Endothelial cell of umbilical vein (primary cell): ENCODE measurements at regions of chr11 and their contacts with region 1.

Region 1: GRCh38 chr11:134124660-134125451 is 56.0 kb downstream of the JAM3 start:
- DNase-seq: peak; percentile 67
- H3K4me3 ChIP-seq: peak overlapping the region in 2 of 3 experiments; percentile 36 to 50
- H3K27ac ChIP-seq: peak overlapping the region; percentile 68
- H3K4me1 ChIP-seq: peaks cover 60% of the 10 kb centered on the region
- H3K27me3 ChIP-seq: no peaks in the 10 kb centered on the region
- CTCF ChIP-seq: no peak
- POLR2A ChIP-seq: no peak

Region 2: GRCh38 chr11:134062265-134063123 is 62.4 kb before region 1 on chr11:
- CTCF ChIA-PET with region 1: interaction called, 16 read pairs
- POLR2A ChIA-PET with region 1: interaction called, 3 read pairs
- dilution Hi-C with region 1: no loop called
- intact Hi-C with region 1: loop called (anchors 1 kb)
- DNase-seq: no peak
- H3K4me3 ChIP-seq: no peak overlapping the region
- H3K27ac ChIP-seq: no peak overlapping the region
- H3K4me1 ChIP-seq: peaks cover 26% of the 10 kb centered on the region
- H3K27me3 ChIP-seq: peaks cover 2 to 6% of the 10 kb centered on the region in 2 experiments
- CTCF ChIP-seq: no peak
- POLR2A ChIP-seq: no peak

Region 3: DNA sequence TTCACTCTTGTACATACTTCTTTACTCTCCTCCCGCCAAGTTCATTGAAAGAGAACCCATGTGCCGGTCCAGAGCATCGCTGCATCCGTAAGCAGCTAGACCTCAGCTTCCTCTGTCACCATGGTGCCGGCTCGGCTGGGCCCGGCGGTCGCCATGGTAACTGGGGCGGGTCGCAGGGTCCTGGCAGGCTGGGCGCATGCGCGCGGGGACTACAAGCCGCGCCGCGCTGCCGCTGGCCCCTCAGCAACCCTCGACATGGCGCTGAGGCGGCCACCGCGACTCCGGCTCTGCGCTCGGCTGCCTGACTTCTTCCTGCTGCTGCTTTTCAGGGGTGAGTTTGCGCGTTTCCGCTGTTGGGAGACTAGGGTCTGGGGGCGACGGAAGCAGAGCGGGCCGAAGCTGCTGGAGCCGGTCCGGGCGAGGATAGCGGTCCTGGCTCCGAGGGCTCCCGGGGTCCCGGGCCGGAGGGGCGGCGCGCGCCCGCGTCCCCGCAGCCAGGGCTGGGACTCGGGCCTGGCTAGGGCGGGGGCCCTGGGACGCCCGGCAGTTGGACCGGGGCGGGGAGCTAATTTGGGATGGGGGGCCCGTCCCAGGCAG is 55.9 kb before region 1 on chr11 and contains the start of gene JAM3:
- CTCF ChIA-PET with region 1: interaction called, 4 read pairs
- POLR2A ChIA-PET with region 1: no interaction called
- dilution Hi-C with region 1: no loop called
- intact Hi-C with region 1: loop called (anchors 1 kb)
- DNase-seq: peak; percentile 97
- H3K4me3 ChIP-seq: peak within 1 kb of the TSS; percentile 65 to 89 (median 77)
- H3K27ac ChIP-seq: peak within 1 kb of the TSS; percentile 42
- H3K4me1 ChIP-seq: peaks cover 14% of the 10 kb centered on the region
- H3K27me3 ChIP-seq: peaks cover 2 to 8% of the 10 kb centered on the region in 2 experiments
- CTCF ChIP-seq: no peak
- POLR2A ChIP-seq: peak; percentile 91
- total RNA-seq, gene JAM3: 106 and 137 TPM in 2 replicates

Region 4: DNA sequence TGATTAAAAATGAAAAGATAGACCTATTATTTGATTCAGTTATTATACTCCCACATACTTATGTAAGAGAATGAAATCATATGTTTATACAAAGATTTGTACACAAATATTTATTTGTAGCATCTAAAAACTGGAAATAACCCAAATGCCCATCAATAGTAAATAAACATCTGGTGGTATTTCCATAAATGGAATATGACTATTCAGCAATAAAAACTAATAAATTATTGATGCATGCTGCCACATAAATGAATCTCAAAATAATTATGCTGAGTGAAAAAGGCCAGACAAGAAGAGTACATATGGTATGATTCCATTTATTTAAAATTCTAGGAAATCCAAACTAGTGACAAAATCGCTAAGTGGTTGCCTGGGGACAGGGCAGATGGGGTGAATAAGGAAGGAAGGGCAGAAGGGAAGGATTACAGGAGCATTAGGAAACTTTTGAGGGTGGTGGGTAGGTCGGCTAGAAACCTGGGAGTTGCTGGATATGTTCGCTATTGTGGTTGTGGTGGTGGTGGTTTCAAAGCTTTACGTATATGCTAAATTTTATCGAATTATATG is 14.5 kb before region 1 on chr11:
- CTCF ChIA-PET with region 1: no interaction called
- POLR2A ChIA-PET with region 1: no interaction called
- dilution Hi-C with region 1: no loop called
- intact Hi-C with region 1: no loop called
- DNase-seq: no peak
- H3K4me3 ChIP-seq: no peak overlapping the region
- H3K27ac ChIP-seq: no peak overlapping the region
- H3K4me1 ChIP-seq: no peaks in the 10 kb centered on the region
- H3K27me3 ChIP-seq: no peaks in the 10 kb centered on the region
- CTCF ChIP-seq: no peak
- POLR2A ChIP-seq: no peak

Region 5: DNA sequence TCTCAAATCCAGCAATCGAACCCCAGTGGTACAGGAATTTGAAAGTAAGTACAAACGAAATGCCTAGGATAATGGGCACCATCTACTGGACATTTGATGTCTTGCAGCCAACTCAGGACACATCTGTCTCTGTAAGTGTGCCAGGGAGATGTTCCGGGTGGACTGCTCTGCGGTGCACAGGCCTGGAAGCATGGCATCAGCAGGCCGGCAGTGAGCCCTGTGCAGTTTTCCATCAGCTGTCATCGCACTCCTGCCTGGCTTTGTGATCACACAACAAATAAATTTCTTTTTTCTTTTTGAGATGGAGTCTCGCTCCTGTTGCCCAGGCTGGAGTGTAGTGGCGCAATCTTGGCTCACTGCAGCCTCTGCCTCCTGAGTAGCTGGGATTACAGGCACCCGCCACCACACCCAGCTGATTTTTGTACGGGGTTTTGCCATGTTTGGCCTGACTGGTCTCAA is 15.0 kb after region 1 on chr11:
- CTCF ChIA-PET with region 1: interaction called, 7 read pairs
- POLR2A ChIA-PET with region 1: no interaction called
- dilution Hi-C with region 1: no loop called
- intact Hi-C with region 1: loop called (anchors 1 kb)
- DNase-seq: peak; percentile 87
- H3K4me3 ChIP-seq: no peak overlapping the region
- H3K27ac ChIP-seq: no peak overlapping the region
- H3K4me1 ChIP-seq: no peaks in the 10 kb centered on the region
- H3K27me3 ChIP-seq: no peaks in the 10 kb centered on the region
- CTCF ChIP-seq: peak; percentile 81 to 84
- POLR2A ChIP-seq: no peak

Region 6: DNA sequence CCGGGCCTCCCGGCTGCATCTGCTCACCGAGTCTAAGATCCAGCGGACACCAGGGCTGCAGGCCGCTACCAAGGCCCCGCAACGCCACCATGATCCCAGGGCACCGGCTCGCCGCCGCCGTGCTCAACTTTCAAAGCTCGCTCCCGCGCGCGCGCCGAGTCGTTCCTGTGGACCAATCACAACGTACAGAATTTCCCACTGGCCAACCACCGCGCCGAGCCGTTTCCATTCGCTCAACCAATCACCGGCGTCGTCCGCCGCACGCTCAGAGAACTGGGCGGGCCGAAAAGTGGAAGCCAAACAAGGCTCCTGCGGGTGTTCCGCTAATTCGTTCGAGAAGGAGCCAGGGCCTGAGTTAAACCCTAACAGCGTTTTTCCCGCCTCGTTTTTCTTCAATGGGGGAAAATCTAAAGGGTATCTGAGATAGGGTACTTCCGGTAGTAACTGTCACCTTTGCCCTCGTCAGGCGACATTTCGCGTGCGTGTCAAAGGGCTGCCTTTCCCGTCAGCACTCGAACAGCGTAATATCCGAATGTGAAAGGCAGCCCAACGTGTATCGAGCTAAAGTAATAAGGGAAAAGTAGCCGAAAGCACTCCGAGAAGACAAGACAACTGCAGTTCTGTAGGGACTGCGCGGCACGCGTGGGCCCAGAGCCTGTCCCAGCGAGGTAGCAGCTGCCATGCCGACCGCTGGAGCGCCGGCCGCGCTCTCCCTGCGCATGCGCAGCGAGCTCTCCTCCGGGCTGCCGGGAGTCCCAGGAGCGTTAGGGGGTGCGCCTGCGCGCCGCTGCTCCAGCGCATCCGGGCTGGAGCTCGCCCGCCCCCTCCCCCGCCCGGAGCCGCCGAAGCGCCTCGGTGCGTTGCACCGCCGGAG is 99.2 kb after region 1 on chr11 and contains the starts of genes NCAPD3 and VPS26B:
- CTCF ChIA-PET with region 1: no interaction called
- POLR2A ChIA-PET with region 1: no interaction called
- dilution Hi-C with region 1: no loop called
- intact Hi-C with region 1: loop called (anchors 1 kb)
- DNase-seq: peak; percentile 97
- H3K4me3 ChIP-seq: peak within 1 kb of the TSS; percentile 43 to 73 (median 59)
- H3K27ac ChIP-seq: peak within 1 kb of the TSS; percentile 30
- H3K4me1 ChIP-seq: peaks cover 25% of the 10 kb centered on the region
- H3K27me3 ChIP-seq: no peaks in the 10 kb centered on the region
- CTCF ChIP-seq: no peak
- POLR2A ChIP-seq: peak; percentile 95
- total RNA-seq, gene NCAPD3: 42.6 and 43.8 TPM in 2 replicates
- total RNA-seq, gene VPS26B: 41.6 and 53.1 TPM in 2 replicates

Region 7: GRCh38 chr11:134768463-134768862 is 643.6 kb after region 1 on chr11:
- CTCF ChIA-PET with region 1: no interaction called
- POLR2A ChIA-PET with region 1: no interaction called
- dilution Hi-C with region 1: no loop called
- intact Hi-C with region 1: no loop called
- DNase-seq: no peak
- H3K4me3 ChIP-seq: no peak overlapping the region
- H3K27ac ChIP-seq: no peak overlapping the region
- H3K4me1 ChIP-seq: no peaks in the 10 kb centered on the region
- H3K27me3 ChIP-seq: no peaks in the 10 kb centered on the region
- CTCF ChIP-seq: no peak
- POLR2A ChIP-seq: no peak